ENCODE measurements at regions of chr10 and their contacts with region 1.

Region 1: GRCh38 chr10:103584216-103585010 is 90.9 kb downstream of the NEURL1 start:
- DNase-seq: peak; percentile 83
- ATAC-seq: peak; percentile 69
- H3K4me3 Mint-ChIP-seq: peak overlapping the region; percentile 79
- H3K27ac Mint-ChIP-seq: peak overlapping the region; percentile 95
- H3K4me1 Mint-ChIP-seq: peaks cover 10% of the 10 kb centered on the region
- H3K27me3 Mint-ChIP-seq: no peaks in the 10 kb centered on the region

Region 2: GRCh38 chr10:103491493-103492381 is 92.7 kb before region 1 on chr10:
- CTCF ChIA-PET with region 1: interaction called, 3 read pairs
- POLR2A ChIA-PET with region 1: no interaction called
- intact Hi-C with region 1: loop called in 1 of 2 experiments (anchors 5 kb)
- DNase-seq: no peak
- ATAC-seq: no peak
- H3K4me3 Mint-ChIP-seq: no peak overlapping the region
- H3K27ac Mint-ChIP-seq: peak overlapping the region; percentile 16
- H3K4me1 Mint-ChIP-seq: peaks cover 25% of the 10 kb centered on the region
- H3K27me3 Mint-ChIP-seq: peaks cover 32% of the 10 kb centered on the region

Region 3: DNA sequence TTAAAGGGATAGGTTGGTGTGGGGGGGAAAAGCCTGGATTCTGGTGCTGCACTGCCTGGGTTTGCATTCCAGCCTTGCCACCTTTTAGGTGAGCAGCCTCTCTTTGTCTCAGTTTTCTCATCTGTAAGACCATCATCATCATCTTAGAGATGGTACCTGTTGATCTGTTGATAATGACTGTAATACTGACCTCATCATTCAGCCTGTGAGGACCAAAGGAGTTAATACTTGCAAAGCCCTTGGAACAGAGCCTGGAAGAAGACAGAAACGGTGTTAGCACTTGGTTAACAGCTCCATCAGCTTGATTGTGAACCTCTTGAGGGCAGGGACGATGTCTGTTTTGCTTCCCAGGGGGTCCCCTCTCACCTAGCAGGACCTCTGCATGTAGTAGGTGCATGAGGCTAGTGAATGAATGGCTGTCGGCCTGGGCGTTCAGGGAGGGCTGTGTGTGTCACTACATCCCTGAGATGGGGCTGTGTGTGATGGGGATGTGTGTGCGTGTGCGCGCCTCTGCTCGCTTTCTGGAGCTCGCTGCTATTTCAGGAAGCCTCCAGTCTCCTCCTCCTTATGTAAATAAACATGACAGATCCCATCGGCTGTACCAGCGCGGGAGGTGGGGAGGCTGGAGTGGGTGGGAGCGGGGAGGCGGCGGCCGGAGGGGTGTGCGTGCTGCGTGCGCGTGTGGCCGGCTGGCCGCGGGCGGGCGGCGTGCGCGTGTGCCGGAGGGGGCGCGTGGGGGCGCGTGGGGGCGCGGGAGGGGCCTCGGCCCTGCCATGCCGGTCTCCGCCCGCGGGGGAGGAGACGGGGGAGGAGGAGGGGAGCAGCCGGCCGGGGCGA is 29.7 kb before region 1 on chr10:
- CTCF ChIA-PET with region 1: no interaction called
- POLR2A ChIA-PET with region 1: no interaction called
- intact Hi-C with region 1: loop called in 1 of 2 experiments (anchors 2 kb)
- DNase-seq: peak; percentile 57
- ATAC-seq: peak; percentile 67
- H3K4me3 Mint-ChIP-seq: peak overlapping the region; percentile 61
- H3K27ac Mint-ChIP-seq: peak overlapping the region; percentile 44
- H3K4me1 Mint-ChIP-seq: peaks cover 25% of the 10 kb centered on the region
- H3K27me3 Mint-ChIP-seq: peaks cover 32% of the 10 kb centered on the region

Region 4: GRCh38 chr10:103570844-103571655 is 13.4 kb before region 1 on chr10:
- CTCF ChIA-PET with region 1: no interaction called
- POLR2A ChIA-PET with region 1: no interaction called
- intact Hi-C with region 1: no loop called
- DNase-seq: no peak
- ATAC-seq: no peak
- H3K4me3 Mint-ChIP-seq: no peak overlapping the region
- H3K27ac Mint-ChIP-seq: no peak overlapping the region
- H3K4me1 Mint-ChIP-seq: no peaks in the 10 kb centered on the region
- H3K27me3 Mint-ChIP-seq: no peaks in the 10 kb centered on the region

Measured in activated CD4-positive, alpha-beta T cell treated with anti-CD3 and anti-CD28 coated beads for 36 hours (primary cell).